Activated naive CD4-positive, alpha-beta T cell treated with anti-CD3 and anti-CD28 coated beads for 36 hours (primary cell): ENCODE measurements at regions of chr14 and their contacts with region 1.

Region 1: GRCh38 chr14:22491683-22492621 is 97.1 kb downstream of the DAD1 start:
- DNase-seq: peak; percentile 53
- H3K4me3 Mint-ChIP-seq: peak overlapping the region; percentile 87
- H3K27ac Mint-ChIP-seq: peak overlapping the region; percentile 98
- H3K4me1 Mint-ChIP-seq: peaks cover 12% of the 10 kb centered on the region
- H3K27me3 Mint-ChIP-seq: no peaks in the 10 kb centered on the region

Region 2: GRCh38 chr14:21997300-21997699 is 494.7 kb before region 1 on chr14:
- CTCF ChIA-PET with region 1: no interaction called
- intact Hi-C with region 1: loop called (anchors 10 kb)
- DNase-seq: peak; percentile 65
- H3K4me3 Mint-ChIP-seq: peak overlapping the region; percentile 92
- H3K27ac Mint-ChIP-seq: peak overlapping the region; percentile 96
- H3K4me1 Mint-ChIP-seq: peaks cover 32% of the 10 kb centered on the region
- H3K27me3 Mint-ChIP-seq: no peaks in the 10 kb centered on the region

Region 3: DNA sequence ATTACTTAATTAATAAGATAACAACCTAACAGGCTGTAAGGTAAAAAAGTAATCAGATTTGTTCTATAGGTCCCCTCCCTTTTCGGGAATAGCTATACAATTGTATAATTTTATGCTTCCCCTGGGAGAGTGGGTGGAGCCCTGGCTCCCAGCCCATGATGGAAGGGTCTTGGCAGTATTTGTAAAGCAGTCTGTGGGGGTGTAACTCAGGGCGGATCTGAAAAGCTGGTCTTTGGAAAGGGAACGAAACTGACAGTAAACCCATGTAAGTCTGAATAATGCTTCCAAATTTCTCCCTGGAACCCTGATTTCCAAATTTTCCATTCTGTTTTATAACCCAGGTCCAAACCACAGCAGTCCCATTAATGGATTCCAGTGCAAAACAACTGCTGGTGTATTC is 13.3 kb before region 1 on chr14:
- CTCF ChIA-PET with region 1: no interaction called
- intact Hi-C with region 1: no loop called
- DNase-seq: no peak
- H3K4me3 Mint-ChIP-seq: peak overlapping the region; percentile 62
- H3K27ac Mint-ChIP-seq: peak overlapping the region; percentile 92
- H3K4me1 Mint-ChIP-seq: no peaks in the 10 kb centered on the region
- H3K27me3 Mint-ChIP-seq: no peaks in the 10 kb centered on the region